Ascending aorta (tissue), 2 donors: ENCODE measurements at regions of chr10 and their contacts with region 1.

Region 1: GRCh38 chr10:97731346-97732051 is 5.4 kb upstream of the ZFYVE27 start:
- DNase-seq: peak in 1 of 2 donors; percentile 87
- H3K4me3 ChIP-seq: no peak overlapping the region
- H3K27ac ChIP-seq: no peak overlapping the region
- H3K4me1 ChIP-seq: peaks cover 2 to 7% of the 10 kb centered on the region in 2 donors
- H3K27me3 ChIP-seq: no peaks in the 10 kb centered on the region
- CTCF ChIP-seq: peak; percentile 75 to 81 (median 81)

Region 2: DNA sequence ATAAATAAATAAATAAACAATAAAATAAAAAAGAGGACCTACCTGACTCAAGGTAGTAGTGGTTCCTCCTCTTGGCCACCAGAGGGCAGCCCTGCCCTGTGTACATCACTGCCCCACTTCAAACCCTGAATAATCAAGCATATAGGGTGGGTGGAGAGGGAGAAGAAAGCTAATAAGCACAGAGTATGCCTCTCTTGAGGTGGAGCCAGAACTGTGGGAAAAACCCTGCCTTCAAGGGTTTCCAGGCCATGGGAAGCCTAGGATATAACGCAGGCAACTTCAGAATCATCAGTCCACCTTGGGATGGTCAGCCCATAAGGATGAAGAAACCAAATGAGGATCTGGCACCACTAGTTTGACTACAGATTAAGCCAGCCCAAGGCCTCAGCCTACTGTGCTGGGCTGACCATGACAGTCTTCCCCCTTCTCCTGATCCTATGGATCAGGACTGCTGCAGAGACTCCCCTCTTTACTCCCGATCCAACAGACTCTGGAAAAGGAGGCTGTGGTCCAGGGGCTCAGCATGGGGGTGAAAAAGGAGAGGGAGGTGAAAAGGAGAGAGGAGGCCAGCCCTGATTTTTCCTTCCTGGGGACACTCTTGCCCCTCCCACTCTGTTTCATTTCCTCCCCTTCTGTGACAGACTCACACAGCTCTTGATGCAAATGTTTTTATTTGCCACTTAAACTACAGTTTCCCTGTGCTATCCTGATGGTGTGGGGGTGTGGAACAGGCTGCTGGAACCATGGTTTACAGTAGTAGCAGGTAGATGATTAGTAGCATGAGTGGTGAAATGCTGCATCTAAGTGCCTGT is 54.5 kb before region 1 on chr10:
- intact Hi-C with region 1: loop called (anchors 1 kb)
- DNase-seq: no peak
- H3K4me3 ChIP-seq: no peak overlapping the region
- H3K27ac ChIP-seq: peak overlapping the region in 1 of 2 donors; percentile 55
- H3K4me1 ChIP-seq: peaks cover 0 to 3% of the 10 kb centered on the region in 2 donors
- H3K27me3 ChIP-seq: no peaks in the 10 kb centered on the region
- CTCF ChIP-seq: peak; percentile 80 to 93 (median 91)

Region 3: DNA sequence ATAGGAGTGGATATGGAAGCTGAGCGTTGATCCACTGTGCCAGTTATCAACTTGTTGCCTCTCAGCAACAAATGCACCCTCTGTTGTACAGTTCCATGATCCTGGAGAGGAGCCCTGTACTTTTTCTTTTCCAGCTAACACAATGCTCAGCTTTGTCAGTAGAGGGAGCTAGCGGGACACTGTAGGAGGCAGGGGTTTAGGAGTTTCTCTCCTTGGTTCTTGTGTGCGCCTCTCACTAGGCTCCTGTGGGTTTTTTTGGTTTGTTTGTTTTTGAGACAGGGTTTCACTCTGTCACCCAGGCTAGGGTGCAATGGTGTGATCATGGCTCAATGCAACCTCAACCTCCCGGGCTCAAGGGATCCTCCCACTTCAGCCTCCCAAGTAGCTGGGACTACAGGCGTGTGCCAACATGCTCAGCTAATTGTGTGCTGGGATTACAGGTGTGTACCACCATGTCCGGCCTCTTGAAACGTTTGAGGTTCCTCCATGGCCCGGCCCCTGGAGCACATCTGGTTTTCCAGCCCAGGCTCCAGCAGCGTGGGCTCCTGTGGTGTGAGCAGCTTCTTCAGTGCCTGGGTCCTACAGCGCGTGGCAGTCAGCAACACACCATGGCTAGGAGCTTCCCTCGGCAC is 29.9 kb before region 1 on chr10:
- intact Hi-C with region 1: loop called (anchors 1 kb)
- DNase-seq: peak in 1 of 2 donors; percentile 79
- H3K4me3 ChIP-seq: no peak overlapping the region
- H3K27ac ChIP-seq: no peak overlapping the region
- H3K4me1 ChIP-seq: peaks cover 0 to 7% of the 10 kb centered on the region in 2 donors
- H3K27me3 ChIP-seq: no peaks in the 10 kb centered on the region
- CTCF ChIP-seq: peak; percentile 83 to 92 (median 90)

Region 4: DNA sequence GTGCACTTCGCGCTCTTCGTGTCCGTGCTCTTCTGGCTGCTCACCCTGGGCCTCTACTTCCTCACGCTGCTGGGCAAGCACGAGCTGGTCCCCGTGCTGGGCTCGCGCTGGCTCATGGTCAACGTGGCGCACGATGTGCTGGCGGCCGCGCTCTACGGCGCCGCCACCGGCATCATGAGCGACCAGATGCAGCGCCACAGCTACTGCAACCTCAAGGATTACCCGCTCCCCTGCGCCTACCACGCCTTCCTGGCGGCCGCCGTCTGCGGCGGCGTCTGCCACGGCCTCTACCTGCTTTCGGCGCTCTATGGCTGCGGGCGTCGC is 17.5 kb before region 1 on chr10:
- intact Hi-C with region 1: loop called (anchors 1 kb)
- DNase-seq: peak; percentile 47 to 82
- H3K4me3 ChIP-seq: peak overlapping the region; percentile 67 to 78
- H3K27ac ChIP-seq: peak overlapping the region; percentile 98 to 100
- H3K4me1 ChIP-seq: peaks cover 35 to 60% of the 10 kb centered on the region in 2 donors
- H3K27me3 ChIP-seq: no peaks in the 10 kb centered on the region
- CTCF ChIP-seq: peak in 1 of 3 experiments; percentile 18

Region 5: DNA sequence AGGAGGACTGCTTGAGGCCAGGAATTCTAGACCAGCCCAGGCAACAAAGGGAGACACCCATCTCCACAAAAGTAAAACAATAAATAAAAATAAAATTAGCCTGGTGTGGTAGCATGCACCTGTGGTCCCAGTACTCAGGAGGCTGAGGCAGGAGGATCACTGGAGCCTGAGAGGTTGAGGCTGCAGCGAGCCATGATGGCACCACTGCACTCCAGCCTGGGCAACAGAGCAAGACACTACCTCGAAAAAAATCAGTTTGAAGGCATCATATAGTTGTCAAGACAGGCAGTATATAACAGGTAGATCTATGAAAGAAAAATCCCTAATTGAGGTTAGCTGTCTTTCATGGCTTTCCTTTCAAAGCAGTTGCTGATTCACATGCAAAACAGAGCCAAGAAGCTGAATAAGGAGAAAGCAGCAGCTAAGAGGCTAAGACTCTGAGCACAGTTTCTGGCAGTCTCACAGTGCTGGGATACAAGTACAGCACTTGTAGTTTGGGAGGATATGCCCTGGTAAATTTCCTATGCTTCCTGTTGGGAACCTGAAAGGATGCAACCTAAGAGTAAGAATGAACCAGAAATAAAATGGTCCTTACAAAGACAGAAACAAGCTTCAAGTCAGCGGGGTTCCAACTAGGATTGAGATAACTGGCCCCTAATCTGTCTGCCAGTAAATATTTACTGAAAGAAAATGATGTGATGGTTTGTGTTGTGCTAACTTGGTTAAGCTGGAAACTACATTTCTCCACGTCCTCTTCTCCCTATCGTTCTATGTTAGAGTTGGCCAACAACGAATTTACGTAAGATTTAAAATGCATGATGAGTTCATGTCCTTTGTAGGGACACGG is 1083.8 kb after region 1 on chr10:
- intact Hi-C with region 1: no loop called
- DNase-seq: no peak
- H3K4me3 ChIP-seq: no peak overlapping the region
- H3K27ac ChIP-seq: no peak overlapping the region
- H3K4me1 ChIP-seq: no peaks in the 10 kb centered on the region
- H3K27me3 ChIP-seq: no peaks in the 10 kb centered on the region
- CTCF ChIP-seq: no peak